ENCODE measurements at regions of chr18 and their contacts with region 1.

Region 1: GRCh38 chr18:61322265-61322873 is 10.9 kb upstream of the CDH20 start:
- DNase-seq: peak; percentile 46 to 84 (median 76)
- H3K4me3 ChIP-seq: no peak overlapping the region
- H3K27ac ChIP-seq: peak overlapping the region in 25 of 59 donors; percentile 3 to 71 (median 33)
- H3K27me3 ChIP-seq: no peaks in the 10 kb centered on the region
- CTCF ChIP-seq: peak; percentile 28 to 99 (median 90)

Region 2: DNA sequence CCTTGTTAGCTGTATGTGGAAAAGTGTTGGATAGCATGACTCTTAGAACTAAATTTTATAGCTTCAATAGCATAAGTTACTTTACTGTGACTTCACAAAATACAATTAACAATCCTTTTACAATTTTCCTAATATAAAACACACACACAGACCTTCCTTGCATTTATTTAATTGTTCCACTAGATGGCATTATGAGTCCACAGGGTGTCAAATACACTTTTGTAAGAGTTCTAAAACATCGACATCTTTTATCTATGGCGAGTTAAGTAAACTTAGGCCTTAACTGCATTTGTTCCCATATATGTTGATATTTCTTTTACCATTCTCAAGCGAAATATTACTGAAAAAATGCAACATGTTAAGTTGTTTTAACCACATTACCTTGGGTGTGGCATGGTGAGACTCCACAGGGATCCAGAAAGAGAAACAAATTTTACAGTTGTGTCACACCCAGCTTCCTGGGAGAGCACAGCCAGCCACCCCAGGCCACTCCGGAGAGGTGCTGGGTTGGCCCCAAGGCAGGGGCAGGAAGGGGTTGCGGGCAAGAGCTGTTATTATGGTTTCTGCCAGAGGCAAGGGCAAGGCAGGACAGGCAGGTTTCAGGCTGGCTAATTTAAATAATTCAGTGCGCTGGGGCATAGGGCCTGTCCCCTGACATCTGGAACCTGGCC is 637.4 kb before region 1 on chr18:
- intact Hi-C with region 1: loop called in 1 of 2 experiments (anchors 10 kb)
- DNase-seq: no peak
- H3K4me3 ChIP-seq: peak overlapping the region in 5 of 59 donors; percentile 17 to 31 (median 24)
- H3K27ac ChIP-seq: no peak overlapping the region
- H3K27me3 ChIP-seq: no peaks in the 10 kb centered on the region
- CTCF ChIP-seq: peak; percentile 34 to 82 (median 68)

Region 3: DNA sequence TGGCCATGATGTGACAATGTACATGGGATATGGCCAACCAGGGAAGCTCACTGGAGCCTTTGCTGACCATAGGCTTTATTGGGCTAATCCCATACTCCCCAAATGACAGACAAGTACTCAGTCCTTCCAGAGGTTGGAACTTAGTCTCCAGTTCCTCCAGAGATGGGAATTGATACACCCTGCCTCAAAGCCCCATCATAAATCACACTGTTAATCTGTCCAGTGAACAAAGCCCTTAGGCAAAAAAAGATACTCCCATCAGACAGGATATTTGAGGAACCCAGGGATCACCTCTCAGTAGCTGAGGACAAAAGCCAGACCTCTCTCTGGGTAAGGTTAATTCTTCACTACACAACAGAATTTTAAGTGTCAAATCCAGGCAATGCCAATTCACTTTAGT is 236.6 kb before region 1 on chr18:
- intact Hi-C with region 1: loop called in 1 of 2 experiments (anchors 10 kb)
- DNase-seq: no peak
- H3K4me3 ChIP-seq: no peak overlapping the region
- H3K27ac ChIP-seq: peak overlapping the region in 2 of 59 donors; percentile 2 to 21
- H3K27me3 ChIP-seq: no peaks in the 10 kb centered on the region
- CTCF ChIP-seq: no peak

Measured in dorsolateral prefrontal cortex (tissue), 120 donors.